GM18951 (cell line): ENCODE measurements at regions of chr7 and their contacts with region 1.

Region 1: DNA sequence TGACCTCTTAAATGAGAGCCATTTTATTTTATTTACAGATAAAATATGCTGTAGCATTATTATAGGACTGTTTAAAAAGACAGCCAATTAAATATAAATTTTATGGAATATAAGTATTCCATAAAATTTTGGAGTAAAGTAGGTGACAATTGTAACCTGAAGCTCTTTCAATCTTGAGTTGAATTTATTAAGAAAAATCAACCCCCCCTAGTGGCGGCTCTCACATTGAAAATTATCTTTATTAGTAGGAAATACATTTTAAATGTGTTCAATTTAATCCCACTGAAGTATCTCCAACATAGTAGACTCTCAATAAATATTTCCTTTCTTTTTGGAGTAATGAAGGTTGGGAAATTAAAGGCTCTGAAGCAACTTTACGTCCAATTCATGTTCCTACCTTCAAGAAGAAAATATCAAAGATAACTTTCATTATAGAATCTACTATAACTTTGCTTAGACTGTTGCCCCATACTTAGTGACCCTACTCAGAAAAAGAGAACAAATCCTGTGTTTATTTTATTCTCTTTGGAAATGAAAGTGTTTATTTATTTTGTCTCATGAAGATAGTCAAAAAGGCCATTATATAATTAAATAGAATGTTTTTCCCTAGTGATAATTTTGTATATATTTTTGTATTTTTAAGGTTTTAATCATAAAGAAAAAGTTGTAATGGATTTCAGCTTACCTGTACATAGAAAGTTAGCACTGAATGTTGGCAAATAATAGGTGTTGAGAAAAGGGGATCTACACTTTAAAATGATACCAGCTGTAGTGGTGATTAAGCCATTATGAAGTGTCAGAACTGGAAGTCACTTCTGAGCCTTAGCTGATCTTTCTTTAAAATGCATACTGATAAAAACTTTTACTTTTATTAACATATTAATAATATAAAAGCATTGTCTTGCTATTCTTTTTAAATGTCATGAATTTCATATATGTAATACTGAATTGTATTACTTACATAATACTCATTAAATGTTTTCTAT is 3.3 kb downstream of the AHR start:
- POLR2A ChIP-seq: no peak

Region 2: GRCh38 chr7:16982640-16983350 is 319.0 kb before region 1 on chr7:
- in situ Hi-C with region 1: loop called (anchors 10 kb)
- POLR2A ChIP-seq: no peak

Region 3: DNA sequence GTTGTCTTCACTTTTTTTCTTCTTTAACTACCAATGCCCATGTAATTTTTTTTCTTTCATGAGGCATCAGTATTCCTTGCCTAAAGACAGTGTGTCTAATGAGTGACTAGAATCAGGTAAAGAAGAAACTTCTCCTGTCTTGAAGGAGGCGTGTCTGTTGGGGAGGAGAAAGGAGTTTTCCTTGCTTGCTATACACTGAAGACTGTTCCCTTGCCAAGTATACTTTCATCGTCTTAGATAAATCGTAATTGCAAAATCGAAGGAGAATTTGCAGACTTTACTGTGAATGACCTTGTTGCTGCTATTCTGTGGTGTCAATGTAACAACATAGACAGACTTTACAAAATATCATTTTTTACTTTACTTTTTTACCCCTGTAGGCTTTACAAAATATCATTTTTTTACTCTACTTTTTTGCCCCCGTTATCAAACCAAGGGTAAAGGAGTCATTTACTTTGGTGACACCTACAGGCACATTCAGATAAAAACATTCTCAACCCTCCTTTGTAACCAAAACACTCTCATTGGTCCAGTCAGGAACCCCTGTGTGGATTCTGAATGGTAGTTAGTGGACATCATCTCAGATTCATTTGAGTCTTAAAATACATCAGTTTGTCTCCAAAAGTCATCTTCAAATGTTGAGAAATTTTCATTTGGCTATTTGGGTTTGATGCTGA is 229.1 kb after region 1 on chr7:
- in situ Hi-C with region 1: loop called (anchors 10 kb)
- POLR2A ChIP-seq: no peak

Region 4: DNA sequence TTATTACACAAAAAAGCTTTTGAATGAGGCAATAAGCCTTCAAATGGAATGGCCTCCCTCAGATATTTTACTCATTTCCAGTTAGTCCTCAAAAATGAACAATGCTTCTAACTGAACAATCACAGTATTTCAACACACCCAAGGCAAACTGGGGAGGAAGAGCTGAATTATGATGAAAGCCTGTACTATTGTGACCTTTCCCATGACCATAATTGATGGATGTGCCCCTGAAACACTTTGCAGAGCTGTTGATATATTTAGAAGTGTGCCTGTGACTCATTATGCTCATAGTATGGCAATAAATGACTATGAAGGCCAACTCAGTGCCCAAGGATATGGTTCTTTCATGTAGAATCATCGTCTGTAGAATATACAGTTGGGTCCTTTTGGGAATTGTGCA is 244.8 kb after region 1 on chr7:
- in situ Hi-C with region 1: no loop called
- POLR2A ChIP-seq: no peak

Region 5: GRCh38 chr7:17640730-17641377 is 339.1 kb after region 1 on chr7:
- in situ Hi-C with region 1: loop called (anchors 25 kb)
- POLR2A ChIP-seq: no peak